Panc1 (cell line): ENCODE measurements at regions of chr9 and their contacts with region 1.

Region 1: DNA sequence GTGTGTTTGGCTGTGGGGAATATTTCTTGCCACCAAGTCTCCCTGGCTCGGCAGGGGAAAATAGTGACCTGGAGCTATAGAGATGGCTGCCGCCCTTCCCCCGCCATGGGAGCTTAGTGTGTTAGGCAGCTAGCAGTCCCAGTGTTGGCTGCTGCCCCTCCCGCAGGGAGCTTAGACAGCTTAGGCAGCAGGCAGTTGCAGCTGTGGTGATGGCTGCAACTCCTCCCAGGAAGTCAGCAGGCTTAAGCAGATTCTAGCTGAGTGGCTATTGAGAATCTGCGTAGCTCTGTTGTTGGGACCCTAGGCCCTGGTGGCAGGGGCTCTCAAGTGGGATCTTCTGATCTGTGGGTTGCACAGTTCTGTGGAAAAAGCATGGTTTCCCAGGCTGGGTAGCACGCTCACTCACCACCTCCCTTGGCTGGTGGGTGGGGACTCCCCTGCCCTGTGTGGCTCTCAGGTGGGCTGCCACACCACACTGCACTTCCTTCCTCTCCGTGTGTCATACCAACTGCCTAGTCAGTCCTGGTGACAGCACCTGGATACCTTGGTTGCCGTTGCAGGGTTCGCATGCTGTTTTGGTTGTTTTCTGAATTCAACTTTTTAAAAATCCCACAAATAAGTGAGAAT is 9.3 kb downstream of the OR1N2 start:
- DNase-seq: no peak
- ATAC-seq: no peak
- H3K4me3 ChIP-seq: no peak overlapping the region
- H3K27ac ChIP-seq: no peak overlapping the region
- H3K4me1 ChIP-seq: no peaks in the 10 kb centered on the region
- H3K27me3 ChIP-seq: no peaks in the 10 kb centered on the region
- CTCF ChIP-seq: no peak

Region 2: DNA sequence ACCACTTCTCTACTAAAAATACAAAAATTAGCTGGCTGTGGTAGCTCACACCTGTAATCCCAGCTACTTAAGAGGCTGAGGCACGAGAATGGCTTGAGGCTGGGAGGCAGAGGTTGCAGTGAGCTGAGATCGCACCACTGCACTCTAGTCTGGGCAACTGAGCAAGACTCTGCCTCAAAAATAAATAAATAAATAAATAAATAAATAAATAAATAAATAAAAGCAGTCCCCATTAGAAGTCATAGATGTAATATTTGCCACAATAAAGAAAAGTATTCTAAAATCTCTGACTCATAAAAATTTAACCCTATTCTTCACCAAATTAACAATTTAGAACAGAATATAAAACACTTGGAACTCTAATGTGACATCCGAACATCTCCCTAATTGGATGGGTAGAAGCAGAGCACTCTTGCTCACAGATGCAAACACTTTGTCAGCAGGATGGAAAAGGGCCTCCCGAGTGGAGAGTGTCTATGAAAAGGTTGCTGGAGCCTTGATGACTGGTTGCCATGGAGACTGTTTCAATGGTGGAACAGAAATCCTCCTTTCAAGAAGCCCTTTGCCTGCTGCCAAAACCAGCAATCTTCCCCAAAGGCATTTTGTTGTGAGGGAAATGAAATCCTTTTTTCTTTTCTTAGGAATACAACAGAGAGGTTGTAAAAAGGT is 1596.8 kb before region 1 on chr9:
- CTCF ChIA-PET with region 1: no interaction called
- POLR2A ChIA-PET with region 1: interaction called, 12 read pairs
- in situ Hi-C with region 1: no loop called
- intact Hi-C with region 1: no loop called
- DNase-seq: no peak
- ATAC-seq: no peak
- H3K4me3 ChIP-seq: no peak overlapping the region
- H3K27ac ChIP-seq: no peak overlapping the region
- H3K4me1 ChIP-seq: no peaks in the 10 kb centered on the region
- H3K27me3 ChIP-seq: no peaks in the 10 kb centered on the region
- CTCF ChIP-seq: no peak